ENCODE measurements at regions of chr4 and their contacts with region 1.

Region 1: GRCh38 chr4:108018040-108018883 is 28.6 kb downstream of the HADH start:
- DNase-seq: peak; percentile 72
- H3K4me3 ChIP-seq: no peak overlapping the region; a peak in 1 of 4 replicates
- H3K27ac ChIP-seq: no peak overlapping the region
- H3K4me1 ChIP-seq: no peaks in the 10 kb centered on the region
- H3K27me3 ChIP-seq: no peaks in the 10 kb centered on the region
- CTCF ChIP-seq: peak; percentile 94
- EP300 ChIP-seq: no peak
- RAD21 ChIP-seq: peak; percentile 88

Region 2: GRCh38 chr4:107999932-108000539 is 18.2 kb before region 1 on chr4:
- CTCF ChIA-PET with region 1: interaction called, 17 read pairs
- POLR2A ChIA-PET with region 1: no interaction called
- DNase-seq: no peak
- H3K4me3 ChIP-seq: no peak overlapping the region
- H3K27ac ChIP-seq: no peak overlapping the region
- H3K4me1 ChIP-seq: no peaks in the 10 kb centered on the region; a peak in 2 of 4 replicates
- H3K27me3 ChIP-seq: no peaks in the 10 kb centered on the region
- CTCF ChIP-seq: no peak
- EP300 ChIP-seq: no peak
- RAD21 ChIP-seq: no peak

Region 3: GRCh38 chr4:108045694-108046038 is 27.4 kb after region 1 on chr4:
- CTCF ChIA-PET with region 1: interaction called, 14 read pairs
- POLR2A ChIA-PET with region 1: no interaction called
- DNase-seq: no peak
- H3K4me3 ChIP-seq: no peak overlapping the region
- H3K27ac ChIP-seq: no peak overlapping the region
- H3K4me1 ChIP-seq: peaks cover 0 to 6% of the 10 kb centered on the region in 2 experiments; a peak in 1 of 4 replicates
- H3K27me3 ChIP-seq: no peaks in the 10 kb centered on the region
- CTCF ChIP-seq: no peak
- EP300 ChIP-seq: no peak
- RAD21 ChIP-seq: no peak

Region 4: DNA sequence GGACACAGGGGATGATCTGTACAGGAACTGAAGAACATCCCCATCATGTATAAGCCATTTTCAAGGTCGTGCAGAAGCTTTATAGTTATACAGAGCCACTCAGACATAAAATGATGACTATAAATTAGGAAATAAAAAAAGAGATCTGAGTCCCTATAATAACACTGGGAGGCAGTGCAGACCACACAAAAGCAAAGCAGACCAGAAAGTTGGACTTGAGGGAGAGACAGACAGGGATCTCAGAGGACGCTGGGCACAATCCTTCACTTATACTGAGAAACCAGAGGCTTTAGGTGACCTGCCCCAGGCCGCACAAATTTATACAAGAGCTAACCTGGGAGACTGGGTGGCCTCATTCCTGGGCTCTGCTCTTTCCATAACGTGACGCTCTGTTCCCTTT is 41.9 kb after region 1 on chr4:
- CTCF ChIA-PET with region 1: interaction called, 30 read pairs
- POLR2A ChIA-PET with region 1: no interaction called
- DNase-seq: peak; percentile 54
- H3K4me3 ChIP-seq: no peak overlapping the region
- H3K27ac ChIP-seq: no peak overlapping the region
- H3K4me1 ChIP-seq: no peaks in the 10 kb centered on the region
- H3K27me3 ChIP-seq: peaks cover 64% of the 10 kb centered on the region
- CTCF ChIP-seq: peak; percentile 37
- EP300 ChIP-seq: no peak
- RAD21 ChIP-seq: peak; percentile 89

Region 5: DNA sequence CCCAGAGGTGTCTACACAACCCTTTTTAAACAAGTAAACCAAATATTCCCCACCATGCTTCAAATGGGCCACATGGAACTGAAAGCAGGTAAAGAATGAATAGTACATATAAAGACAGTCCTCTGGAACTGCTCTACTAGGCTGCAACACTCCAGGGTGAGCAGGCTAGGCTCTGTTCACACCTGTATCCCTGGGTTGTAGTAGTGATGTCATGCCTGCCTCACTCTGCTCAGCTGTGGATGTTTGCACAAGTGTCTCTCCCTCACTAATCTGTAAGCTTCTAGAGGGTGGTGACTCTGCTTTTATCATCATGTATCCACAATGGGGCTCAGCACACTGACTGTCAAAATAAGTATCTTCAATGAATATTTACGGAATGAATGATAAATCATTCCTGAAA is 130.1 kb after region 1 on chr4:
- CTCF ChIA-PET with region 1: no interaction called
- POLR2A ChIA-PET with region 1: no interaction called
- DNase-seq: no peak
- H3K4me3 ChIP-seq: no peak overlapping the region
- H3K27ac ChIP-seq: no peak overlapping the region
- H3K4me1 ChIP-seq: no peaks in the 10 kb centered on the region
- H3K27me3 ChIP-seq: peaks cover 7% of the 10 kb centered on the region
- CTCF ChIP-seq: no peak
- EP300 ChIP-seq: no peak
- RAD21 ChIP-seq: no peak

Region 6: GRCh38 chr4:108560616-108561015 is 542.4 kb after region 1 on chr4:
- CTCF ChIA-PET with region 1: interaction called, 11 read pairs
- POLR2A ChIA-PET with region 1: no interaction called
- DNase-seq: no peak
- H3K4me3 ChIP-seq: peak overlapping the region in 1 of 2 experiments; percentile 13; a peak in 1 of 4 replicates
- H3K27ac ChIP-seq: no peak overlapping the region
- H3K4me1 ChIP-seq: no peaks in the 10 kb centered on the region
- H3K27me3 ChIP-seq: no peaks in the 10 kb centered on the region; the same call in 1 of the 2 replicates
- CTCF ChIP-seq: no peak
- EP300 ChIP-seq: no peak
- RAD21 ChIP-seq: no peak

Region 7: GRCh38 chr4:108581083-108581482 is 562.8 kb after region 1 on chr4:
- CTCF ChIA-PET with region 1: interaction called, 18 read pairs
- POLR2A ChIA-PET with region 1: no interaction called
- DNase-seq: no peak
- H3K4me3 ChIP-seq: no peak overlapping the region
- H3K27ac ChIP-seq: no peak overlapping the region
- H3K4me1 ChIP-seq: no peaks in the 10 kb centered on the region
- H3K27me3 ChIP-seq: no peaks in the 10 kb centered on the region; the same call in 1 of the 2 replicates
- CTCF ChIP-seq: no peak
- EP300 ChIP-seq: no peak
- RAD21 ChIP-seq: no peak